ENCODE measurements at regions of chr3 and their contacts with region 1.

Region 1: DNA sequence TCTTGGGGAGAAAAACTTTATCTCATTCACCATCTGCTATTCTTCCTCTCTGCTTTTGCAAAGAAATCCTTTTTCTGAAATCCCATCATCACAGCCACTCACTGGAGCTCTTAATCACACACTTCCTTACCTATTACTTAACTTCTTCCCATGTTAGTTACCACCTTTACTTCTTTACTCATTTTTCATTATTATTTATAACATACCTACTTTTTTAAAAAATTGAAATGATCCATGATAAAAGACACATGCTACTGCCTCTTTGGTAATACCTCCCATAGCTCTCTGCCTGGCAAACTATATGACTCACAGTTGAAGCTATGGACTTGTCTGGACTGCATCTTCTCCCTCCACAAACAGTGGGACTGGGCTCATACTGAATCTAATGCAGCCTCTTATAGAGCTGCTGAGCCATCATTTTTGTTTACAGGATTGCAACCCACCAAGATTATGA is 150.3 kb downstream of the TNIK start:
- DNase-seq: peak; percentile 70
- H3K4me3 Mint-ChIP-seq: no peak overlapping the region
- H3K27ac Mint-ChIP-seq: peak overlapping the region; percentile 88
- H3K4me1 Mint-ChIP-seq: peaks cover 25% of the 10 kb centered on the region
- H3K27me3 Mint-ChIP-seq: no peaks in the 10 kb centered on the region
- CTCF ChIP-seq: no peak

Region 2: DNA sequence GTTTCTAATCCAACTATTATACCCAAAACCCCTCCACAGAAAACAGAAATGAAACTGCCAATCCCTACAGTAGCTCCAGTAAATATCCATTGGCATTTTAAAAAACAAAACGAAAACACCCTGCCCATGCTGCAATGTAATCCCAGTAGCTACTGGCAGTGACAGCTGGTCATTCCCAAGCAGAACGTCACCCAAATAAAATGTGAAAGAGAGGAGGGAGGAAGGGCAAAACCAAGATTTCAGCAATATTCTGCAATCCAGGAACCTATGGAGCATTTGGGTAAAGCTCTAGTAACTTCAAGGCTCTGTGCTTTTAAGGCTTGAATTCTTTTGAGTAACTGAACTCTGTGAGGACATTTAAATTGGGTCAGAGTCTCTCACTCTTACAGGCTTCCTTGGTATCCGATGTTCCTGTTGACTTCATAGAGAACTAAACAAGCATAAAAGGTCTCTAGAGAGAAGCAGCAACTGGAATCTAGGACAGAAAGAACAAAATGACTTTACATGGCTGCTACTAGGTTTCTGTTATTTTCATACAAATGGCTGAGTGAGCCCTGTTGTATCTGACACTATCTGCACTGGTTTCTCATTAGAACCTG is 14.1 kb after region 1 on chr3:
- CTCF ChIA-PET with region 1: interaction called, 3 read pairs
- POLR2A ChIA-PET with region 1: interaction called, 11 read pairs
- intact Hi-C with region 1: no loop called
- DNase-seq: no peak
- H3K4me3 Mint-ChIP-seq: no peak overlapping the region
- H3K27ac Mint-ChIP-seq: no peak overlapping the region
- H3K4me1 Mint-ChIP-seq: peaks cover 6% of the 10 kb centered on the region
- H3K27me3 Mint-ChIP-seq: no peaks in the 10 kb centered on the region
- CTCF ChIP-seq: no peak

Region 3: DNA sequence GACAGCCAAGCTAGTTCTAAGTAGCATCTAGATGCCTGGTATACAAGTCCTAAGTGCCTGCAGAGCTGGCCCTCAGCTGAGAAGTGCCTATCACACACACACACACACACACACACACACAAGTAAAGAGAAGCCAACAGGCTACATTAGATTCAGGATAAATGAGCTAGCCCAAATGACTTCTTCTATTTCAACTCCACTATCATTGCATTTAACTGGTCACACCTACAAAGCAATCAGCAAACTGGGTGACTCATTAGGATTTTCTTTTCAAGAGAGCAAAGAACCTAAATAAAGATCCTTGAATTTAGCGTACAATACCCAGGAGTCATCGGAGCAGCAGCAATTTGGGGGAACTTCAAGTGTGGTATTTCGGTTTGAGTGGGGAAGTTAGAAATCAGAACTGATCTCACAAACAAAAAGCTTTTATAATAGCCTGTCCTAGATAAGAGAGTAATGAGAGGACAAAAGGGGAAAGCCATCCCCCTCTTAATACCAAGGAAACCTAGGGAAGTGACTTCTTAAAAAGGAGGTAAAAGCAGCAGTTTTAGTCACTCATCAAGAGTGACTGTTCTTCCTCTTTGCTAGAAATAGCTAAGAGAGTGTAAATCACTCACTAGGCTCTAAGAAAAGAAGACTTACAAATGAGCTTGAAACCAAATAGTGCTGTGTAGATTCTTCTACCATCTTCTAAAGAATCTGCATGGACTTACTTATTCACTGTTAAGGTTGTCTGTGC is 37.5 kb after region 1 on chr3:
- CTCF ChIA-PET with region 1: interaction called, 3 read pairs
- POLR2A ChIA-PET with region 1: interaction called, 13 read pairs
- intact Hi-C with region 1: no loop called
- DNase-seq: peak; percentile 45
- H3K4me3 Mint-ChIP-seq: peak overlapping the region; percentile 16
- H3K27ac Mint-ChIP-seq: peak overlapping the region; percentile 1
- H3K4me1 Mint-ChIP-seq: peaks cover 40% of the 10 kb centered on the region
- H3K27me3 Mint-ChIP-seq: no peaks in the 10 kb centered on the region
- CTCF ChIP-seq: no peak

Region 4: GRCh38 chr3:172442606-172443005 is 1132.7 kb after region 1 on chr3:
- CTCF ChIA-PET with region 1: no interaction called
- POLR2A ChIA-PET with region 1: no interaction called
- intact Hi-C with region 1: no loop called
- DNase-seq: no peak
- H3K4me3 Mint-ChIP-seq: no peak overlapping the region
- H3K27ac Mint-ChIP-seq: no peak overlapping the region
- H3K4me1 Mint-ChIP-seq: no peaks in the 10 kb centered on the region
- H3K27me3 Mint-ChIP-seq: peaks cover 10% of the 10 kb centered on the region
- CTCF ChIP-seq: no peak

Measured in MCF 10A (cell line).